ENCODE measurements at regions of chr18 and their contacts with region 1.

Region 1: GRCh38 chr18:12391618-12392165 is 14.7 kb upstream of the AFG3L2 start:
- DNase-seq: peak; percentile 48
- H3K4me3 ChIP-seq: no peak overlapping the region
- H3K27ac ChIP-seq: no peak overlapping the region
- H3K4me1 ChIP-seq: no peaks in the 10 kb centered on the region
- H3K27me3 ChIP-seq: no peaks in the 10 kb centered on the region
- CTCF ChIP-seq: peak; percentile 97 to 99

Region 2: GRCh38 chr18:12336875-12337274 is 54.8 kb before region 1 on chr18:
- CTCF ChIA-PET with region 1: no interaction called
- dilution Hi-C with region 1: no loop called
- in situ Hi-C with region 1: no loop called
- intact Hi-C with region 1: no loop called
- DNase-seq: peak; percentile 68
- H3K4me3 ChIP-seq: no peak overlapping the region
- H3K27ac ChIP-seq: no peak overlapping the region
- H3K4me1 ChIP-seq: peaks cover 14% of the 10 kb centered on the region
- H3K27me3 ChIP-seq: no peaks in the 10 kb centered on the region
- CTCF ChIP-seq: no peak

Region 3: DNA sequence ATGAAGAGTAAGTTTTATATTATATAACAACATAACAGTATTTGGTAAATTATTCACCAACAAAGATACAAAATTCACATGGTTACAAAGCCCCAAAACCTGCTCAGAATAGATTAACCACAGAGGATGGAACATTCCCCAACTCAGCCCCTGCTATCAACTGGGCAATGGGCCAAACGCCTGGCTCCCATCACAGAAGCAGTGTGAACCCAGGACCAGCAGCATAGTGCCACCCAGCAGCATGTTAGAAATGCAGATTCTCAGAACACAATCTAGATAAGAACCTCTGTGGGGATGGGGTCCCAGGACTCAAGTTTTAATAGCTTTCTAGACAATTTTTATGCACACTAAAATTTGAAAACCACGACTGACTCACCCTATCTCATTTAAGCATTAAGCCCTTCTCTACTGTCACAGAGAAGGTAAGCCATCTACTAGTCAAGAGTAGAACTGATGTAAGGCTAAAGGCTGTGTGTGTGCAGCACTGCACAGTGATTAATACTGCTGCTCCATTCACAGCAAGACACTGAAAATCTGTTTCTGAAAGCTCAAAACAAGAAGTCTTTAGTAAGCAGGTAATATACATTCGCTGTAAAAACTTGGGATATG is 29.8 kb before region 1 on chr18:
- CTCF ChIA-PET with region 1: no interaction called
- dilution Hi-C with region 1: no loop called
- in situ Hi-C with region 1: no loop called
- intact Hi-C with region 1: no loop called
- DNase-seq: no peak
- H3K4me3 ChIP-seq: no peak overlapping the region
- H3K27ac ChIP-seq: no peak overlapping the region
- H3K4me1 ChIP-seq: no peaks in the 10 kb centered on the region
- H3K27me3 ChIP-seq: no peaks in the 10 kb centered on the region
- CTCF ChIP-seq: no peak

Region 4: DNA sequence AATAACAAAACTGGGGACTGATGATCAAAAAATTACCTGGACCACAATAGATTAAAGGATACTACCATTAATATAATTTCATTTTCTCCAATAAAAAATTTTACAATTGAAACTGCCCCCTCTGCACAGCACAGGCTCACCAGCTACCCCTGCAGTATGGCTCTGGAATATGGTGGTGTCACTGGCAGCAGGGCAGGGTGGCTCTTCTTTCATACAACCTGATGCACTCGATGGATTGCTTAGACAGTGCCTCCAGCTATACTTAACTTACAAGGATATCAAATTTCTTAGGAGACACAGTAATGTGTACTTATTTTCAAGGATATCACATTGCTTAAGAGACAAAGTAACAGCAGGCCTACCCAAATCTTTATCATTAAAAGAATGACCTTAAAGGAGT is 140.1 kb after region 1 on chr18:
- CTCF ChIA-PET with region 1: no interaction called
- dilution Hi-C with region 1: no loop called
- in situ Hi-C with region 1: no loop called
- intact Hi-C with region 1: loop called (anchors 2 kb)
- DNase-seq: no peak
- H3K4me3 ChIP-seq: no peak overlapping the region
- H3K27ac ChIP-seq: no peak overlapping the region
- H3K4me1 ChIP-seq: peaks cover 6% of the 10 kb centered on the region
- H3K27me3 ChIP-seq: no peaks in the 10 kb centered on the region
- CTCF ChIP-seq: peak in 1 of 2 donors; percentile 32

Region 5: GRCh38 chr18:12702221-12703095 is 310.8 kb after region 1 on chr18 and contains the starts of genes CEP76 and PSMG2:
- CTCF ChIA-PET with region 1: no interaction called
- dilution Hi-C with region 1: no loop called
- in situ Hi-C with region 1: no loop called
- intact Hi-C with region 1: loop called (anchors 5 kb)
- DNase-seq: peak; percentile 87
- H3K4me3 ChIP-seq: peak within 1 kb of the TSS; percentile 91 to 99 (median 96)
- H3K27ac ChIP-seq: peak within 1 kb of the TSS; percentile 91
- H3K4me1 ChIP-seq: peaks cover 24% of the 10 kb centered on the region
- H3K27me3 ChIP-seq: no peaks in the 10 kb centered on the region
- CTCF ChIP-seq: no peak
- total RNA-seq, gene CEP76: 6.2 to 7.5 TPM
- total RNA-seq, gene PSMG2: 47.7 to 67.9 TPM